ENCODE measurements at regions of chr15 and their contacts with region 1.

Region 1: DNA sequence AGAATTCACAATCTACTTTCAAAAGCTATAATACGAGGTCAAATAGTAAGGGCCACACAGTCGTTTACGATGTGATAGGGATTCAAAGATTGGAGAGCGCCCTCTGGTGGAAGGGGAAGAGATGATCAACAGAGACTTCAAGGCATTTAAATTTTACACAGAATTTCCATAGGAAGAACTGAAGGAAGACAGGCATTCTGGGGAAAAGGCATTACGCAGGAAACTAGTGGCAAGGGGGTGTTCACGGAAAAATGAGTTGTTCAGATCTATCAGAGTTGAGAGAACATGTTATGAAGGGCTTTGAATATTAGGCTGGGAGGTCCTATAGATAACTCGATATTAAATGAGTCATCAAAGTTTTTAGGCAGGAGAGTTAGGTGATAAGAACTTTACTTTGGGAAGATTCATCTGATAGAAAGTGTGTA is 128.7 kb downstream of the FRMD5 start:
- DNase-seq: peak in 1 of 2 donors; percentile 65
- H3K4me3 ChIP-seq: no peak overlapping the region
- H3K27ac ChIP-seq: no peak overlapping the region
- H3K4me1 ChIP-seq: no peaks in the 10 kb centered on the region
- H3K27me3 ChIP-seq: no peaks in the 10 kb centered on the region
- CTCF ChIP-seq: peak; percentile 41 to 76 (median 41)

Region 2: DNA sequence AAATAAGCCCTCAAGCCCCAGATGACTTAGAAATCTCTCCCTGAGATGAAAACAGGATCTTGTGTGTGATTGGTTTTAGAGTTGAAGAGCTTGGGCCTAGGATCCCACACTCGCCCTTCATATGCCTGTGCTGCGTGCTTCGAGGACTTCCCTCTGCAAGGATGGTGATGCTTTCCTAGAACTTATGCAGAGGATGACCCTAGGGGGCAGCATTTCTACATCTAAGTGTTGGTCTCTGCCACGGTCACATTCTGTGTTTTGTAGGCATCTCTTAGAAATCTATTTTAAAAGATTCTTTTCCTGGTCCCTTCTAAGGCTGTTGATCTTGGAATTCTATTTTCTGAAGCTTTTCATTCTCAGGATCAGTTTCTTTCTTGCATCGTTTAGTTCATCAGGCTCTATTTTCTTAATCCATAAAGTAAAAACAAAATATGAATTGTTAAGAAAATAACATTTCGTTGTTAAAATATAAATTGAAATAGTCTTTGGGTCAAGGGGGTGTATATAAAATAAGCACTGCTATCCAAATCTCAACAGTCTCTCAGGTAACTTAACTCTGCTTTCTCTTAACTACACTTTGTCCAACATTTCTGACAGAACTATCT is 193.8 kb before region 1 on chr15:
- intact Hi-C with region 1: loop called (anchors 2 kb)
- DNase-seq: no peak
- H3K4me3 ChIP-seq: no peak overlapping the region
- H3K27ac ChIP-seq: no peak overlapping the region
- H3K4me1 ChIP-seq: no peaks in the 10 kb centered on the region
- H3K27me3 ChIP-seq: no peaks in the 10 kb centered on the region
- CTCF ChIP-seq: peak in 2 of 3 experiments; percentile 32 to 64

Region 3: GRCh38 chr15:43903864-43904290 is 162.5 kb before region 1 on chr15:
- intact Hi-C with region 1: loop called (anchors 1 kb)
- DNase-seq: peak in 1 of 2 donors; percentile 69
- H3K4me3 ChIP-seq: no peak overlapping the region
- H3K27ac ChIP-seq: no peak overlapping the region
- H3K4me1 ChIP-seq: no peaks in the 10 kb centered on the region
- H3K27me3 ChIP-seq: no peaks in the 10 kb centered on the region
- CTCF ChIP-seq: peak; percentile 67 to 90 (median 79)

Measured in ascending aorta (tissue), 2 donors.